ENCODE measurements at regions of chr9 and their contacts with region 1.

Region 1: GRCh38 chr9:123234853-123235252 is 33.5 kb downstream of the STRBP start:
- DNase-seq: no peak
- H3K4me3 ChIP-seq: no peak overlapping the region
- H3K27ac ChIP-seq: no peak overlapping the region
- H3K4me1 ChIP-seq: no peaks in the 10 kb centered on the region
- H3K27me3 ChIP-seq: no peaks in the 10 kb centered on the region
- CTCF ChIP-seq: no peak
- POLR2A ChIP-seq: no peak

Region 2: DNA sequence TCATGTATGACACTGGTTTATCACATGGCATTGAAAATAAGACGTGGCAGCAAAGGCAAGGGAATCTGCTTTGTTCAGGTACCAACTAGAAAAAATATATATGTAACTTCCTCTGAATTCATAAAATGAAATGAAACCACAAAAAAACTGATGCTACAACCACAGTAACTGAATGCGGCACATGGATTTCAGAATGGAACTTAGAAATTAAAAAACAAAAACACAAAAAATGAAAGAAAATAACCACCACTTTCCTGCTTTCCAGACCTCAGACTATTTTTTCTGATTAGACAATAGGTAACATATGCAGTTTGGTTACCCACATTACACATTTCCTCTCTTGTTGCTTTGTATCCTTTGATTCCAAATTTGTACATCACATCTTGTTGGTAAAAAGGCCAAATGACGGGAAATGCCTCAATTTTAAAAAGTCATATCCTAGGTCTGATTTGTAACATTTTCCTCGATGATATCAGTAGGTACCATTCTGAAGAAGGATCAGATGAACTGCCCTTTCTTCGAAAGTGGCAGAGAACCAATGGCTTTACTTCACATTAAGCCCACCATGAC is 388.4 kb before region 1 on chr9:
- CTCF ChIA-PET with region 1: no interaction called
- POLR2A ChIA-PET with region 1: no interaction called
- dilution Hi-C with region 1: no loop called
- intact Hi-C with region 1: no loop called
- DNase-seq: no peak
- H3K4me3 ChIP-seq: no peak overlapping the region
- H3K27ac ChIP-seq: no peak overlapping the region
- H3K4me1 ChIP-seq: no peaks in the 10 kb centered on the region
- H3K27me3 ChIP-seq: no peaks in the 10 kb centered on the region
- CTCF ChIP-seq: no peak
- POLR2A ChIP-seq: no peak

Region 3: GRCh38 chr9:123327697-123328100 is 92.8 kb after region 1 on chr9:
- CTCF ChIA-PET with region 1: interaction called, 3 read pairs
- POLR2A ChIA-PET with region 1: interaction called, 10 read pairs
- dilution Hi-C with region 1: no loop called
- intact Hi-C with region 1: no loop called
- DNase-seq: no peak
- H3K4me3 ChIP-seq: no peak overlapping the region
- H3K27ac ChIP-seq: no peak overlapping the region
- H3K4me1 ChIP-seq: no peaks in the 10 kb centered on the region
- H3K27me3 ChIP-seq: no peaks in the 10 kb centered on the region
- CTCF ChIP-seq: no peak
- POLR2A ChIP-seq: no peak